Activated CD8-positive, alpha-beta T cell treated with anti-CD3 and anti-CD28 coated beads, Interleukin-2, amount 10 ng/mL, durations not matched to agents 7 days and 5 days (primary cell): ENCODE measurements at regions of chr10 and their contacts with region 1.

Region 1: GRCh38 chr10:45239642-45240041 is 75.8 kb downstream of the OR13A1 start:
- DNase-seq: no peak
- ATAC-seq: no peak
- H3K4me3 Mint-ChIP-seq: no peak overlapping the region
- H3K27ac Mint-ChIP-seq: no peak overlapping the region
- H3K4me1 Mint-ChIP-seq: peaks cover 43% of the 10 kb centered on the region
- H3K27me3 Mint-ChIP-seq: peaks cover 2% of the 10 kb centered on the region

Region 2: DNA sequence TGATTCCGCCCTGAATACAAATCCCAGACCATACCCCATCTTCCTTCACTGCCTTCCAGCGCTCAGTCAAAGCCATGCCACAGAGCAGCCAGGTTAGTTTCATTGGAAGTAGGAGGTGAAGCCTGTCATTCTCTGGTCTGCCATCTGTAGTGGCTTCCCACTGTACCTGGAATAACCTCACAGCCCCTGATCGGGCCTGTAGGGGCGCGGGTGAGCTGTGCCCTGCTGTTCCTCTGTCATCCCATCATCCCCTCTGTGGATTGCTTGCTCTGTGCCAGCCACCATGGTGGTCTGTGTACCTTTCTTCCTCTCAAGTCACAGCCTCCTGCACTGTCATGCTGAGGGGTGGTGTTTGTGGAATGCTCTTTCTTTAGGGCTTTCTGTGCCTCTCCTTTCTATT is 83.9 kb before region 1 on chr10:
- CTCF ChIA-PET with region 1: no interaction called
- POLR2A ChIA-PET with region 1: no interaction called
- DNase-seq: no peak
- ATAC-seq: no peak
- H3K4me3 Mint-ChIP-seq: no peak overlapping the region
- H3K27ac Mint-ChIP-seq: no peak overlapping the region
- H3K4me1 Mint-ChIP-seq: no peaks in the 10 kb centered on the region
- H3K27me3 Mint-ChIP-seq: peaks cover 3% of the 10 kb centered on the region

Region 3: DNA sequence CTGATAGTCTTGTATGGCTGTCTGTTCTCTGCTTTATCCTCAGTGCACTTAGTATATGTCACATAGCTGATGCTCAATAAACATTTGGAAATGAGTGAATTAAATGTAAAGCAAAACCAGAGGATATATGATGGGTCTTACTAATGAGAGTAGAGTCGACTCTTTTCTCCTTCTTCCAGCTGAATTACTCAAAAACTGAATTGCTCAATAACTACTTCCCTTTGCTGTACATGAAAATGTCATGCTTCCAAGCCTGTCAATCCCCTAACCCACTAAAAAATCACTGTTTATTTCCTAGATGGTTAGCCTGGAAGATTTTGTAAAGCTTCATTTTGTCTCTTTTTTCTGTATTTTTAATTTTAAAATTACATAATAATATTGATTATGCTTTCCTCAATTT is 12.2 kb before region 1 on chr10:
- CTCF ChIA-PET with region 1: no interaction called
- POLR2A ChIA-PET with region 1: no interaction called
- DNase-seq: no peak
- ATAC-seq: no peak
- H3K4me3 Mint-ChIP-seq: no peak overlapping the region
- H3K27ac Mint-ChIP-seq: no peak overlapping the region
- H3K4me1 Mint-ChIP-seq: no peaks in the 10 kb centered on the region
- H3K27me3 Mint-ChIP-seq: peaks cover 24% of the 10 kb centered on the region

Region 4: DNA sequence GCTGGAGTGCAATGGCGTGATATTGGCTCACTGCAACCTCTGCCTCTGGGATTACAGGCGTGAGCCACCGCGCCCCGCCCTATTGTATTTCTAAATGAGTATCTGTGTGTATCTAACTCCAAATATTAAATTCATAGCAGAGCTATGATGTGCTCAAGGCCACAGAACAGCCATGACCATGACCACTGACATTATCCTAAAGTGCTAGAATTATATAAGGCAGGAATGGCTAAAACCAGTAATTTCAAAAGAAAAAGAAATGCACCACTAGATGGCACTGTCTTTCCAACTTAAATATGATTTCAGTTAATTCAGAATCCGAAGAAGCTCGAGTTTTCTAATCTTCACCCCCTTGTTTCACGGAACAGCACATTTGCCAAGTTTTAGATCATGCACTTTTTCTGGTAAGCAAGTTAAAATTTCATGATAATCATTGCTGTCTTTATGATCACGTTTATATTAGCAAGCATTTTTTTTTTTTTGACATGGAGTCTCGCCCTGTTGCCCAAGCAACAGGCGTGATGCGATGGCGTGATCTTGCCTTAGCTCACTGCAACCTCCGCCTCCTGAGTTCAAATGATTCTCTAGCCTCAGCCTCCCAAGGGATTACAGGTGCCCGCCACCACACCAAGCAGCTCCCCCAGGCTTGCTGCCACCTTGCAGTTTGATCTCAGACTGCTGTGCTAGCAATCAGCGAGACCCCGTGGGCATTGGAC is 10.5 kb after region 1 on chr10:
- CTCF ChIA-PET with region 1: interaction called, 24 read pairs
- POLR2A ChIA-PET with region 1: no interaction called
- DNase-seq: no peak
- ATAC-seq: peak; percentile 65
- H3K4me3 Mint-ChIP-seq: peak overlapping the region; percentile 41
- H3K27ac Mint-ChIP-seq: no peak overlapping the region
- H3K4me1 Mint-ChIP-seq: peaks cover 13% of the 10 kb centered on the region
- H3K27me3 Mint-ChIP-seq: peaks cover 8% of the 10 kb centered on the region

Region 5: GRCh38 chr10:45265995-45266394 is 26.4 kb after region 1 on chr10:
- CTCF ChIA-PET with region 1: no interaction called
- POLR2A ChIA-PET with region 1: no interaction called
- DNase-seq: no peak
- ATAC-seq: no peak
- H3K4me3 Mint-ChIP-seq: no peak overlapping the region
- H3K27ac Mint-ChIP-seq: no peak overlapping the region
- H3K4me1 Mint-ChIP-seq: no peaks in the 10 kb centered on the region
- H3K27me3 Mint-ChIP-seq: peaks cover 38% of the 10 kb centered on the region

Region 6: DNA sequence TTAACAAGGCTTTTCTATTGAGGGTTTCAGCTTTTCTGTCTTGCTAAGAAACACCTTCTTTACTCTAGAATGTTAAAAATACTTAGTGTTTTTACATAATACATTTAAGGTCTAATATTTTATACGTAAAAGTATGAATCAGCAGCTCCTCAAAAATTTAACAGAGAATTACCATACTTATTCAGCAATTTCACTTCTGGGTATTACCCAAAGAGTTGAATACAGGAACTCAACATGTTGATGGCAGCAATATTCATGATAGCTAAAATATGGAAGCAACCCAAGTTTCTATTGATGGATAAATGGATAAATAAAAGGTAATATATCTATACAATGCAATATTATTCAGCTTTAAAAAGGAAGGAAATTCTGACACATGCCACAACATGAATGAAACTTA is 85.5 kb after region 1 on chr10:
- CTCF ChIA-PET with region 1: no interaction called
- POLR2A ChIA-PET with region 1: no interaction called
- DNase-seq: no peak
- ATAC-seq: no peak
- H3K4me3 Mint-ChIP-seq: no peak overlapping the region
- H3K27ac Mint-ChIP-seq: no peak overlapping the region
- H3K4me1 Mint-ChIP-seq: peaks cover 2% of the 10 kb centered on the region
- H3K27me3 Mint-ChIP-seq: peaks cover 35% of the 10 kb centered on the region